HCT116 (cell line): ENCODE measurements at regions of chr11 and their contacts with region 1.

Region 1: DNA sequence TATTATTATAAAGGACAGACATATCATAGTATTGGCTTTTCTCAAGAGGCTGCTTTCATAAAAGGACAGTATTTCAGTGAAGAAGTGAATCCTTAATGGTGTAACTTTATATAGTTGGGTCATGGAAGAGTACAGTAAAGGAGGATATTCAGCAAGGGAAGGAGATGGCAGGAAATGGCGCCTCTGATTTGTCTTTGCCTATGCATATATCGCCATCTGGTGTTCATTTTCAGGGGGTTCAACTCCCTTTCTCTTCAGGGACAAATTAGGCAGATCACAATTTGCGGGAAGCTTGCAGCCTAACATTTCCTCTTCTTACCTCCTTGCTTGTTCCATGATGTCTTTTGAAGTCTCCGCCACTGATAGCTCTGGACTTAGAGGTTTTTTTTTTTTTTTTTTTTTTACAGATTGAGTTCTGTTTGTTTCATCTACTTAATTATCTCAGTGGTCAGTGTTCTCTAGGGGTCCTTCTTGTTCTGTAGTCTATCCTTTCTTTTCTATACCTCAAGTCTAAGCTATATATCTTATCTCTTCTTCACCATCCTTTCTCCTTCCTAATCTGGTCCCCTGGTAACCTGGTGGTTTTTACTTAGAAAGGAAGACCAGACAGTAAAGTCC is 21.8 kb upstream of the RRM1 start:
- DNase-seq: peak; percentile 59
- ATAC-seq: peak; percentile 94
- H3K4me3 ChIP-seq: no peak overlapping the region
- H3K27ac ChIP-seq: no peak overlapping the region
- H3K4me1 ChIP-seq: no peaks in the 10 kb centered on the region
- H3K27me3 ChIP-seq: no peaks in the 10 kb centered on the region
- CTCF ChIP-seq: peak; percentile 79 to 95 (median 89)
- POLR2A ChIP-seq: no peak
- RAD21 ChIP-seq: peak; percentile 97

Region 2: DNA sequence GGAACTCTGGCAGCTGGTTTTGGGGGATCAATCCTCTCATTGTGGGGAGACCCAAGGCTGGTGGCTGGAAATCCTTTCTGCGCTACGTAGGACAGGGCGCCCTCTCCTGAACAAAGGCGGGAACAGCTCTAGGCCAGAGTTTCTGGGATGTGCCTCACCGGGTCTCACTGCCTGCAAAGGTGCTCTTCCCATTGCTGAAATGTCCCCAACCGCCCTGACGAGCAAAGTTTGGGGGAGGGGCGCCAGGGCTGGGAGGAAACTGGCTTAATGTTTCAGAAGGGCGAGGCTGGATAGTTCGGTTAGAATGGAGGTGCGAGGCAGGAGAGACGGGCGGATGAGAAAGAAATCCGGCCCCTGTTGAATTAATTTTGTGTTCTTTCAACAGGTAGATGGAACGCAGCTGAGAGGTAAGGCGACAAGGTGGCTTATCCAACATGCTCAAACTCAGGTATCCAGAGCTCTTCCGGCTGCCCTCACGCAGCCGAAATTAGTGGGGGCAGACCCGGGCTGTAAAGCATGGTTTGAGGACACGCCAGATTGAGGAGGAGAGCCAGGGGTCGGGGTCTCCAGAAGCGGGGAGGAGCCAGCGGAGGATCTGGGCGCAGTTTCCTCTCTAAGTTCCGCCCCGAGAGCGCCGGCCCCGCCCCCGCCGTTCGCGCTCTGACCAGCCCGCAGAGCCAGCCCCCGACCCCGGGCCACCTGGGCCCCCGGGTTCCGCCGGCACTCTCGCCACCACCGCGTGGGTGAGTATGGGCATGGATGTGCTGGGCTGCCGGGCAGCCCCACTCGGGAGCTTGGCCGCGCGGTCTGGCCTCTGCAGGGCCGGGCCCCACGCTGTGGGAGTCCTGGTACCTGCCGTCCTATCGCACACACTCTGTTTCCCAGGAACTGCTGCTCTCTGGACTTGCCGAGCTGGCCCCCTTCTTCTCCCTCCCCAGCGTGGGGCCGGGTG is 264.6 kb before region 1 on chr11 and contains the start of gene PGAP2:
- CTCF ChIA-PET with region 1: interaction called, 15 read pairs
- POLR2A ChIA-PET with region 1: interaction called, 3 read pairs
- RAD21 ChIA-PET with region 1: no interaction called
- intact Hi-C with region 1: loop called (anchors 1 kb)
- DNase-seq: peak; percentile 61
- ATAC-seq: peak; percentile 85
- H3K4me3 ChIP-seq: peak within 1 kb of the TSS; percentile 81 to 85
- H3K27ac ChIP-seq: peak within 1 kb of the TSS; percentile 43
- H3K4me1 ChIP-seq: peaks cover 5 to 26% of the 10 kb centered on the region in 2 experiments; a peak in 3 of 4 replicates
- H3K27me3 ChIP-seq: no peaks in the 10 kb centered on the region
- CTCF ChIP-seq: peak; percentile 54 to 75 (median 75); a peak in 5 of 6 replicates
- POLR2A ChIP-seq: no peak
- RAD21 ChIP-seq: peak; percentile 70
- total RNA-seq, gene PGAP2: 30.5 TPM

Region 3: GRCh38 chr11:3824714-3825472 is 247.9 kb before region 1 on chr11:
- CTCF ChIA-PET with region 1: interaction called, 6 read pairs
- POLR2A ChIA-PET with region 1: no interaction called
- RAD21 ChIA-PET with region 1: interaction called in 1 of 2 experiments, 3 read pairs
- intact Hi-C with region 1: loop called (anchors 1 kb)
- DNase-seq: no peak
- ATAC-seq: peak; percentile 97
- H3K4me3 ChIP-seq: no peak overlapping the region
- H3K27ac ChIP-seq: no peak overlapping the region
- H3K4me1 ChIP-seq: peaks cover 0 to 5% of the 10 kb centered on the region in 2 experiments; a peak in 1 of 4 replicates
- H3K27me3 ChIP-seq: no peaks in the 10 kb centered on the region
- CTCF ChIP-seq: peak; percentile 67 to 96 (median 90)
- POLR2A ChIP-seq: no peak
- RAD21 ChIP-seq: peak; percentile 49

Region 4: GRCh38 chr11:3841426-3842350 is 231.1 kb before region 1 on chr11:
- CTCF ChIA-PET with region 1: interaction called, 31 read pairs
- POLR2A ChIA-PET with region 1: interaction called, 4 read pairs
- RAD21 ChIA-PET with region 1: interaction called, 3 to 4 read pairs
- intact Hi-C with region 1: no loop called
- DNase-seq: peak; percentile 68
- ATAC-seq: peak; percentile 77
- H3K4me3 ChIP-seq: peak overlapping the region; percentile 67 to 78
- H3K27ac ChIP-seq: peak overlapping the region; percentile 72
- H3K4me1 ChIP-seq: peaks cover 14 to 48% of the 10 kb centered on the region in 2 experiments
- H3K27me3 ChIP-seq: no peaks in the 10 kb centered on the region
- CTCF ChIP-seq: peak; percentile 62 to 73 (median 72); a peak in 5 of 6 replicates
- POLR2A ChIP-seq: no peak
- RAD21 ChIP-seq: peak; percentile 55

Region 5: DNA sequence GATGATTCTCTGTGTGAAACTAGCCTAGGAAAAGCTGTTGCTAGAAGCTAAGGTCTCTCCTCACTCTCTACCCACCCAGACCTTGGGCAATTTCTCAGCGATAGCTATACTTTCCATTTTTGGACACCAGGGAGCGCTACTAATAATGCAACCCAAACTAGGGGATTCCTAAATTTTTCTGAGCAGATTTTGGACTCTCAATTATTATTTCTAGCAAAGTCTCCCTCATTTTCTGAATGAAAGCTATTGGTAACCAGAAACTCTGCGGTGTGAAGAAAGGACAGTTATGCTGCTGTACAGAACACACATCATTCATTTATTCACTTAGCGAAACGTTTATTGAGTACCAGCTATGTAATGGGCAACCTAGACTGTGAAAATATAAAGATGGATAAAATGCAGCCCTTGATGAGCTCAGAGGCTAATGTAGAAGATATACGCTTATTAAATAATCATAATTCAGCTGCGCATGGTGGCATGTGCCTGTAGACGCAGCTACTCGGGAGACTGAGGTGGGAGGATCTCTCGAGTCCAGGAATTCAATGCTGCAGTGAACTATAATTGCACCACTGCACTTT is 223.4 kb before region 1 on chr11:
- CTCF ChIA-PET with region 1: interaction called, 152 read pairs
- POLR2A ChIA-PET with region 1: interaction called, 8 read pairs
- RAD21 ChIA-PET with region 1: interaction called, 14 to 19 read pairs
- intact Hi-C with region 1: loop called (anchors 1 kb)
- DNase-seq: no peak
- ATAC-seq: peak; percentile 91
- H3K4me3 ChIP-seq: no peak overlapping the region
- H3K27ac ChIP-seq: no peak overlapping the region
- H3K4me1 ChIP-seq: peaks cover 5 to 19% of the 10 kb centered on the region in 2 experiments
- H3K27me3 ChIP-seq: 0 out of 2 replicates have a peak, but pooled peaks cover 3% of the 10 kb centered on the region
- CTCF ChIP-seq: peak; percentile 70 to 80 (median 77); a peak in 5 of 6 replicates
- POLR2A ChIP-seq: no peak
- RAD21 ChIP-seq: peak; percentile 77

Region 6: GRCh38 chr11:3854977-3855807 is 217.6 kb before region 1 on chr11 and contains the start of gene STIM1:
- CTCF ChIA-PET with region 1: interaction called, 152 read pairs
- POLR2A ChIA-PET with region 1: interaction called, 3 read pairs
- RAD21 ChIA-PET with region 1: interaction called, 12 to 14 read pairs
- intact Hi-C with region 1: loop called (anchors 1 kb)
- DNase-seq: peak; percentile 86
- ATAC-seq: peak; percentile 88
- H3K4me3 ChIP-seq: peak within 1 kb of the TSS; percentile 70 to 78
- H3K27ac ChIP-seq: peak within 1 kb of the TSS; percentile 61
- H3K4me1 ChIP-seq: peaks cover 14 to 31% of the 10 kb centered on the region in 2 experiments
- H3K27me3 ChIP-seq: no peaks in the 10 kb centered on the region
- CTCF ChIP-seq: peak; percentile 80 to 89 (median 83)
- POLR2A ChIP-seq: no peak
- RAD21 ChIP-seq: peak; percentile 86
- total RNA-seq, gene STIM1: 22.3 TPM

Region 7: GRCh38 chr11:3995949-3996554 is 76.7 kb before region 1 on chr11:
- CTCF ChIA-PET with region 1: no interaction called
- POLR2A ChIA-PET with region 1: no interaction called
- RAD21 ChIA-PET with region 1: no interaction called
- intact Hi-C with region 1: no loop called
- DNase-seq: no peak
- ATAC-seq: no peak
- H3K4me3 ChIP-seq: no peak overlapping the region
- H3K27ac ChIP-seq: no peak overlapping the region
- H3K4me1 ChIP-seq: no peaks in the 10 kb centered on the region
- H3K27me3 ChIP-seq: no peaks in the 10 kb centered on the region
- CTCF ChIP-seq: no peak
- POLR2A ChIP-seq: no peak
- RAD21 ChIP-seq: no peak

Region 8: GRCh38 chr11:4083198-4083597 is 10.4 kb after region 1 on chr11:
- CTCF ChIA-PET with region 1: interaction called, 11 read pairs
- POLR2A ChIA-PET with region 1: no interaction called
- RAD21 ChIA-PET with region 1: no interaction called
- intact Hi-C with region 1: no loop called
- DNase-seq: no peak
- ATAC-seq: no peak
- H3K4me3 ChIP-seq: no peak overlapping the region
- H3K27ac ChIP-seq: no peak overlapping the region
- H3K4me1 ChIP-seq: no peaks in the 10 kb centered on the region
- H3K27me3 ChIP-seq: no peaks in the 10 kb centered on the region
- CTCF ChIP-seq: no peak
- POLR2A ChIP-seq: no peak
- RAD21 ChIP-seq: no peak